IMR-90 (cell line): ENCODE measurements at regions of chr2 and their contacts with region 1.

Region 1: DNA sequence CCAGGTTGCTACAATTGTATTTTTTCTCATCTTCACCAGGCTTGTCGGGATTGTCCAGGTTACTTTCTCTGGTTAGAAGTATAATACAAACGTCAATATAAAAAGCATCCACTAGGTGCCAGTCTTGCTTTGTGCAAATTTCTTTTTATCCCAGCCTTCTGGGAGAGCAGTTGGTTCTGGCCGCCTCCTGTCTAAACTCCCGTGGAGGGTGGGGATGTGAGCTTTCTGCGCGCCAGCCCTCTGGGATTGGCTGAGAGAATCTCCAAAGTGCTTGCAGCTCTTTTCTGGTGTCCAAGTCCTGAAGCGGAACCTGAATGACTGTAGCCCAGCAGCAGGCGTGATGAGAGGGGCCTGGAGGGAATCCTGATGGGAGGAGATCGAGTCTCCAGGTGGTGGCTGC is 22.4 kb upstream of the TOGARAM2 start:
- DNase-seq: peak; percentile 74
- ATAC-seq: peak; percentile 92
- H3K4me3 ChIP-seq: no peak overlapping the region
- H3K27ac ChIP-seq: no peak overlapping the region
- H3K4me1 ChIP-seq: peaks cover 2% of the 10 kb centered on the region; the same call in 1 of the 2 replicates
- H3K27me3 ChIP-seq: no peaks in the 10 kb centered on the region
- CTCF ChIP-seq: peak; percentile 79
- POLR2A ChIP-seq: peak; percentile 53; the same call in 1 of the 2 replicates
- RAD21 ChIP-seq: peak; percentile 98

Region 2: GRCh38 chr2:29014811-29015421 is 56.2 kb after region 1 on chr2:
- CTCF ChIA-PET with region 1: no interaction called
- POLR2A ChIA-PET with region 1: no interaction called
- dilution Hi-C with region 1: no loop called
- in situ Hi-C with region 1: no loop called
- intact Hi-C with region 1: no loop called
- DNase-seq: peak; percentile 57
- ATAC-seq: peak; percentile 52
- H3K4me3 ChIP-seq: no peak overlapping the region
- H3K27ac ChIP-seq: no peak overlapping the region
- H3K4me1 ChIP-seq: peaks cover 18% of the 10 kb centered on the region
- H3K27me3 ChIP-seq: peaks cover 4% of the 10 kb centered on the region; the same call in 1 of the 2 replicates
- CTCF ChIP-seq: 0 out of 2 replicates have a peak, but pooled peaks have one; percentile 25
- POLR2A ChIP-seq: no peak
- RAD21 ChIP-seq: peak; percentile 24

Region 3: GRCh38 chr2:29115797-29116781 is 157.4 kb after region 1 on chr2:
- CTCF ChIA-PET with region 1: interaction called, 5 read pairs
- POLR2A ChIA-PET with region 1: no interaction called
- dilution Hi-C with region 1: no loop called
- in situ Hi-C with region 1: no loop called
- intact Hi-C with region 1: loop called (anchors 5 kb)
- DNase-seq: peak; percentile 85
- ATAC-seq: peak; percentile 42
- H3K4me3 ChIP-seq: peak overlapping the region; percentile 88
- H3K27ac ChIP-seq: peak overlapping the region; percentile 94
- H3K4me1 ChIP-seq: peaks cover 26% of the 10 kb centered on the region
- H3K27me3 ChIP-seq: no peaks in the 10 kb centered on the region
- CTCF ChIP-seq: no peak
- POLR2A ChIP-seq: peak; percentile 63; the same call in 1 of the 2 replicates
- RAD21 ChIP-seq: no peak

Region 4: GRCh38 chr2:29309090-29310029 is 350.7 kb after region 1 on chr2:
- CTCF ChIA-PET with region 1: interaction called, 4 read pairs
- POLR2A ChIA-PET with region 1: no interaction called
- dilution Hi-C with region 1: no loop called
- in situ Hi-C with region 1: no loop called
- intact Hi-C with region 1: loop called (anchors 1 kb)
- DNase-seq: peak; percentile 66
- ATAC-seq: peak; percentile 95
- H3K4me3 ChIP-seq: no peak overlapping the region
- H3K27ac ChIP-seq: no peak overlapping the region
- H3K4me1 ChIP-seq: no peaks in the 10 kb centered on the region
- H3K27me3 ChIP-seq: peaks cover 23% of the 10 kb centered on the region
- CTCF ChIP-seq: peak; percentile 71
- POLR2A ChIP-seq: no peak
- RAD21 ChIP-seq: peak; percentile 71

Region 5: DNA sequence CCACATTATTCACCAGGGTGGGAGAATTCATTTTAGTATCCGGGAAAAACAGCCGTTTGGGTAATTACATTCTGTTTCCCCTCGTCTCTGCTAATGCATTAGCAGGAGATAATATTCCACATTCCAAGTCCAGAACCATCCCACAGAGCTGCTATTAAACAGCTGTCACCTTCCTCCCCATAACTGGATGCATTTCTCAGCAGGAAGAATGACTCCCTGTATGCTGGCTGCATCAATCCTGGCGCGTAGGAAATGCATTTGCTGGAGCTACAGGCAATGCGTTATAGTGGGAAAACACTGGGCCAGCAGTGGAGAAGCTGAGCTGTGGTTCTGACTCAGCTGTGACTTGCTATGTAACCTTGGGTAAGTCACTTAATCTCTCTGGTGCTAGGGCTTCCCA is 402.5 kb after region 1 on chr2:
- CTCF ChIA-PET with region 1: no interaction called
- POLR2A ChIA-PET with region 1: no interaction called
- dilution Hi-C with region 1: no loop called
- in situ Hi-C with region 1: no loop called
- intact Hi-C with region 1: no loop called
- DNase-seq: peak; percentile 3
- ATAC-seq: no peak
- H3K4me3 ChIP-seq: no peak overlapping the region
- H3K27ac ChIP-seq: no peak overlapping the region
- H3K4me1 ChIP-seq: no peaks in the 10 kb centered on the region
- H3K27me3 ChIP-seq: peaks cover 11% of the 10 kb centered on the region
- CTCF ChIP-seq: no peak
- POLR2A ChIP-seq: no peak
- RAD21 ChIP-seq: no peak

Region 6: GRCh38 chr2:29841386-29842004 is 882.8 kb after region 1 on chr2:
- CTCF ChIA-PET with region 1: no interaction called
- POLR2A ChIA-PET with region 1: no interaction called
- dilution Hi-C with region 1: loop called (anchors 25 kb)
- in situ Hi-C with region 1: loop called (anchors 10 kb)
- intact Hi-C with region 1: loop called (anchors 1 kb)
- DNase-seq: peak; percentile 22
- ATAC-seq: peak; percentile 91
- H3K4me3 ChIP-seq: no peak overlapping the region
- H3K27ac ChIP-seq: no peak overlapping the region
- H3K4me1 ChIP-seq: no peaks in the 10 kb centered on the region
- H3K27me3 ChIP-seq: peaks cover 2% of the 10 kb centered on the region
- CTCF ChIP-seq: peak; percentile 83
- POLR2A ChIP-seq: no peak
- RAD21 ChIP-seq: peak; percentile 83

Region 7: GRCh38 chr2:30026087-30027055 is 1067.7 kb after region 1 on chr2:
- CTCF ChIA-PET with region 1: no interaction called
- POLR2A ChIA-PET with region 1: no interaction called
- dilution Hi-C with region 1: no loop called
- in situ Hi-C with region 1: no loop called
- intact Hi-C with region 1: loop called (anchors 1 kb)
- DNase-seq: peak; percentile 22
- ATAC-seq: peak; percentile 90
- H3K4me3 ChIP-seq: no peak overlapping the region
- H3K27ac ChIP-seq: no peak overlapping the region
- H3K4me1 ChIP-seq: no peaks in the 10 kb centered on the region
- H3K27me3 ChIP-seq: peaks cover 10% of the 10 kb centered on the region
- CTCF ChIP-seq: peak; percentile 56
- POLR2A ChIP-seq: no peak
- RAD21 ChIP-seq: peak; percentile 65